ENCODE measurements at regions of chr10 and their contacts with region 1.

Region 1: DNA sequence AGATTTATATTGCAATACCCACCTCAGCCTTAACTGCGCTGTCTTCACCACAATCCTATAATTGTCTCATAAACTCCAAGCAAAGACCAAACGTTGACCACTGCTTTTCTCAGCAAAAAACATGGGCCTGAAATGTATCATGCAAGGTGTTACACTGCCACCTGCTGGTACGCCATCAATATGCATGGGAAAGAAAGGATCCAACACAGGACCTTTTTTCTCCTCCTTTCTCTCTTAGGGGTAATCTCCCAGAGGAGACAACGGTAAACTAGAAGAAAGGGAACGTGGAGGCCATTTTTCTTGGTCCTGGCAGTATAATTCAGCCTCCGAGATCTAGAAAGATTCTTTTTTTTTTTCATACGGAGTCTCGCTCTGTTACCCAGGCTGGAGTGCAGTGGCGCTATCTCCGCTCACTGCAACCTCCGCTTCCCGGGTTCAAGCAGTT is 79.1 kb upstream of the MPP7 start:
- DNase-seq: peak; percentile 68 to 83
- ATAC-seq: peak; percentile 90 to 96 (median 92)
- H3K4me3 ChIP-seq: no peak overlapping the region
- H3K27ac ChIP-seq: no peak overlapping the region
- H3K4me1 ChIP-seq: peaks cover 10% of the 10 kb centered on the region
- H3K27me3 ChIP-seq: no peaks in the 10 kb centered on the region
- CTCF ChIP-seq: peak; percentile 95

Region 2: DNA sequence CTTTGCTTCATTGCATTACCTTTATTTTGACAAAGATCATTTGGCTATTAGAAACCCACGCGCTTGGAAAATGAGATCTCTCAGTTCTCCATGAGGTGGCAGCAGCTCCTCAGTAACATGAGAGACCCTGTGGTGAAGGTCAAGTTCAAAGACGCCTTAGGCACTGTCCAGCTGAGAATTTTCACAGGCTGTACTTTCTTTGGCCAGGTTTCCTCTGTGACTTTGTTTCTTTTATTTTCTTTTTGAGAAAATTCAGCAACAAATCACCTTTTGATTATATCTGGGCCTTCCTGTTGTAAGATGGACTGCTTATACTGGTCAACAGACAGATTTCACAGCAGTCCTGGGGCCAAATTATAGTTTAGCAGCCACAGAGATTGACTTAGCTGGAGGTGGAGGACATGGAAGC is 823.3 kb before region 1 on chr10:
- intact Hi-C with region 1: loop called (anchors 10 kb)
- DNase-seq: peak in 1 of 2 donors; percentile 29
- ATAC-seq: peak; percentile 80 to 92 (median 82)
- H3K4me3 ChIP-seq: no peak overlapping the region
- H3K27ac ChIP-seq: no peak overlapping the region
- H3K4me1 ChIP-seq: no peaks in the 10 kb centered on the region
- H3K27me3 ChIP-seq: no peaks in the 10 kb centered on the region
- CTCF ChIP-seq: peak; percentile 70

Region 3: GRCh38 chr10:27742195-27743011 is 639.5 kb before region 1 on chr10:
- intact Hi-C with region 1: loop called in 1 of 2 experiments (anchors 10 kb)
- DNase-seq: peak; percentile 85 to 86
- ATAC-seq: peak; percentile 87 to 92 (median 90)
- H3K4me3 ChIP-seq: peak overlapping the region; percentile 75
- H3K27ac ChIP-seq: peak overlapping the region; percentile 37
- H3K4me1 ChIP-seq: peaks cover 22% of the 10 kb centered on the region
- H3K27me3 ChIP-seq: peaks cover 0 to 59% (median 34%) of the 10 kb centered on the region in 3 donors
- CTCF ChIP-seq: peak; percentile 77

Region 4: DNA sequence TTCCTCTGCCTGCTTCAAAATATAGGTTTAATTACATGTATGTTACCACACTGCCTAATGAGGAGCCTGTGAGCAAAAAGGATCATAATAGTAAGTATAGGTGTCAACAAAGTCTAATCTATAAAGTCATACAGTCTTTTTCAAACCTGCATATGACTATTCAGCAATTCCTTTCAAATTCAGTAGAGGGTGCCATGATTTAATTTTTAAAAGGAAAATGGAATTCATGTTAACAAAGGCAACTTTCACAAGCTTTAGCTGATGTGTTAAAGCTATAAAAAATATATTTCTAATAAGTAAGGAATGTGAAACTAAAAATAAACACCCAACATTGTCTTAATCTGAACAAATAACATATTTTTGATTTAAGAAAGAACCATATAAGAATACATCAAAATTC is 131.1 kb before region 1 on chr10:
- intact Hi-C with region 1: loop called (anchors 1 to 2 kb)
- DNase-seq: no peak
- ATAC-seq: peak; percentile 37 to 80 (median 56)
- H3K4me3 ChIP-seq: no peak overlapping the region
- H3K27ac ChIP-seq: peak overlapping the region; percentile 25
- H3K4me1 ChIP-seq: peaks cover 29% of the 10 kb centered on the region
- H3K27me3 ChIP-seq: no peaks in the 10 kb centered on the region
- CTCF ChIP-seq: peak; percentile 65

Region 5: GRCh38 chr10:28295336-28295735 is 86.6 kb before region 1 on chr10:
- intact Hi-C with region 1: loop called (anchors 5 kb)
- DNase-seq: no peak
- ATAC-seq: no peak
- H3K4me3 ChIP-seq: no peak overlapping the region
- H3K27ac ChIP-seq: peak overlapping the region; percentile 44
- H3K4me1 ChIP-seq: peaks cover 39% of the 10 kb centered on the region
- H3K27me3 ChIP-seq: no peaks in the 10 kb centered on the region
- CTCF ChIP-seq: no peak

Region 6: GRCh38 chr10:28302638-28303488 is 79.1 kb before region 1 on chr10 and contains the start of gene MPP7:
- intact Hi-C with region 1: loop called (anchors 5 kb)
- DNase-seq: peak; percentile 96 to 97
- ATAC-seq: peak; percentile 98 to 99 (median 98)
- H3K4me3 ChIP-seq: peak within 1 kb of the TSS; percentile 95
- H3K27ac ChIP-seq: peak within 1 kb of the TSS; percentile 95
- H3K4me1 ChIP-seq: peaks cover 28% of the 10 kb centered on the region
- H3K27me3 ChIP-seq: no peaks in the 10 kb centered on the region
- CTCF ChIP-seq: peak; percentile 41
- total RNA-seq, gene MPP7: 11.3 to 12.5 (median 12.3) TPM